ENCODE measurements at regions of chr3 and their contacts with region 1.

Region 1: GRCh38 chr3:50436114-50436674 is 67.2 kb downstream of the CACNA2D2 start:
- DNase-seq: peak; percentile 58 to 82 (median 71)
- ATAC-seq: peak; percentile 97
- H3K4me3 ChIP-seq: no peak overlapping the region
- H3K4me3 Mint-ChIP-seq: no peak overlapping the region
- H3K27ac ChIP-seq: no peak overlapping the region
- H3K27ac Mint-ChIP-seq: no peak overlapping the region
- H3K4me1 ChIP-seq: peaks cover 8% of the 10 kb centered on the region
- H3K4me1 Mint-ChIP-seq: no peaks in the 10 kb centered on the region
- H3K27me3 ChIP-seq: no peaks in the 10 kb centered on the region
- H3K27me3 Mint-ChIP-seq: peaks cover 4% of the 10 kb centered on the region
- CTCF ChIP-seq: peak; percentile 82

Region 2: DNA sequence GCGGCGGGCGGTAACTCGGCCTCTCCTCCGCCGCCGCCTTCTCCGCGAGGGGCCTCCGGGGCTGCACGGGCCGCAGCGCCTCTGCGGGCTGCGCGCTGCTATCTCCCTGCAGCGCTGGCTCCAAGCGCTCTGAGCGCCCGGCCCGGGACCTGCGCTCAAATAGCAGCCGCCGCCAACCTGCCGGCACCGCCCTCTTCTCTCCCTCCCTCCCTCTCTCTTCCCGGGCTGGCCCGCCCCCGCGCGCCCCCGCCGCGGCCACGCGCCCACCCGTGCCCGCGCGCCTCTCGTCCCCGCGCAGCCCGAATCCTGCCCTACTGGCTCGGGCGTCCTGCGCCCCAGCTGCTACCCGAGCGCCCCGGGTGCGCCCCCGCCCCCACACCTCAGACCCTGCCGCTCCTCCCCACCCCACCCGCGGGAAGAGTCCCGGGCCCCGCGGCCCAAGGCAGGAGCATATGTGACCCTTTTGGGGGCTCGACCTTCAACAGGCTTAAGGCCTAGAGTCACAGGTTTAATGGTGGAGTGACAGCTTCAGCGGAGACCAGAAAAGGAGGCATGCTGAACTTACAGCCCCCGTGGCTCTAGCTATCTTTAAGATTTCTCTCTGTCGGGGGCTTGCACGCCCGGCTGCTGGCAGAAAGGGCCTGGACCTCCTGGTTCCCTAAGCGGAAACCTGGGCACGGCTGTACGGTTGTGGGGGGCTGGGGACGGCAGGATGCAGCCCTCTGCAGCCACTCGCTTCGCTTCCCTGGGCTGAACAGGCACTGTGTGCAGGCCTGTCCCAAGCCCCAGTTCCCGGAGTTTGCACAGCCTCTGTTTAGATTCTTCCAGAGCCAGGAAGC is 67.5 kb after region 1 on chr3 and contains the start of gene CACNA2D2:
- CTCF ChIA-PET with region 1: no interaction called
- POLR2A ChIA-PET with region 1: no interaction called
- intact Hi-C with region 1: loop called in 1 of 2 experiments (anchors 5 kb)
- DNase-seq: peak; percentile 39 to 83 (median 69)
- ATAC-seq: peak; percentile 94
- H3K4me3 ChIP-seq: peak within 1 kb of the TSS; percentile 48
- H3K4me3 Mint-ChIP-seq: peak within 1 kb of the TSS; percentile 83
- H3K27ac ChIP-seq: no peak within 1 kb of the TSS
- H3K27ac Mint-ChIP-seq: no peak within 1 kb of the TSS
- H3K4me1 ChIP-seq: peaks cover 16% of the 10 kb centered on the region
- H3K4me1 Mint-ChIP-seq: peaks cover 6% of the 10 kb centered on the region
- H3K27me3 ChIP-seq: peaks cover 3 to 17% of the 10 kb centered on the region in 2 experiments
- H3K27me3 Mint-ChIP-seq: peaks cover 21% of the 10 kb centered on the region
- CTCF ChIP-seq: no peak
- total RNA-seq, gene CACNA2D2: 2.5 to 3.8 TPM

Region 3: GRCh38 chr3:50542177-50543034 is 106.2 kb after region 1 on chr3:
- CTCF ChIA-PET with region 1: interaction called, 12 read pairs
- POLR2A ChIA-PET with region 1: no interaction called
- intact Hi-C with region 1: loop called in 1 of 2 experiments (anchors 1 kb)
- DNase-seq: peak; percentile 29 to 79 (median 50)
- ATAC-seq: peak; percentile 74
- H3K4me3 ChIP-seq: no peak overlapping the region
- H3K4me3 Mint-ChIP-seq: no peak overlapping the region
- H3K27ac ChIP-seq: no peak overlapping the region
- H3K27ac Mint-ChIP-seq: no peak overlapping the region
- H3K4me1 ChIP-seq: no peaks in the 10 kb centered on the region
- H3K4me1 Mint-ChIP-seq: no peaks in the 10 kb centered on the region
- H3K27me3 ChIP-seq: peaks cover 0 to 4% of the 10 kb centered on the region in 2 experiments
- H3K27me3 Mint-ChIP-seq: peaks cover 13% of the 10 kb centered on the region
- CTCF ChIP-seq: peak; percentile 90

Region 4: GRCh38 chr3:50550079-50550741 is 114.0 kb after region 1 on chr3:
- CTCF ChIA-PET with region 1: no interaction called
- POLR2A ChIA-PET with region 1: no interaction called
- intact Hi-C with region 1: loop called in 1 of 2 experiments (anchors 1 kb)
- DNase-seq: peak; percentile 37 to 75 (median 56)
- ATAC-seq: peak; percentile 83
- H3K4me3 ChIP-seq: no peak overlapping the region
- H3K4me3 Mint-ChIP-seq: no peak overlapping the region
- H3K27ac ChIP-seq: no peak overlapping the region
- H3K27ac Mint-ChIP-seq: no peak overlapping the region
- H3K4me1 ChIP-seq: peaks cover 5% of the 10 kb centered on the region
- H3K4me1 Mint-ChIP-seq: no peaks in the 10 kb centered on the region
- H3K27me3 ChIP-seq: no peaks in the 10 kb centered on the region
- H3K27me3 Mint-ChIP-seq: no peaks in the 10 kb centered on the region
- CTCF ChIP-seq: peak; percentile 85

Region 5: GRCh38 chr3:51539291-51539941 is 1103.2 kb after region 1 on chr3:
- CTCF ChIA-PET with region 1: no interaction called
- POLR2A ChIA-PET with region 1: no interaction called
- intact Hi-C with region 1: no loop called
- DNase-seq: peak in 10 of 14 experiments; percentile 2 to 49 (median 10)
- ATAC-seq: peak; percentile 43
- H3K4me3 ChIP-seq: peak overlapping the region; percentile 87
- H3K4me3 Mint-ChIP-seq: peak overlapping the region; percentile 90
- H3K27ac ChIP-seq: peak overlapping the region in 1 of 2 donors; percentile 65
- H3K27ac Mint-ChIP-seq: peak overlapping the region; percentile 82
- H3K4me1 ChIP-seq: peaks cover 27% of the 10 kb centered on the region
- H3K4me1 Mint-ChIP-seq: peaks cover 46% of the 10 kb centered on the region
- H3K27me3 ChIP-seq: no peaks in the 10 kb centered on the region
- H3K27me3 Mint-ChIP-seq: no peaks in the 10 kb centered on the region
- CTCF ChIP-seq: no peak